ENCODE measurements at regions of chr7 and their contacts with region 1.

Region 1: DNA sequence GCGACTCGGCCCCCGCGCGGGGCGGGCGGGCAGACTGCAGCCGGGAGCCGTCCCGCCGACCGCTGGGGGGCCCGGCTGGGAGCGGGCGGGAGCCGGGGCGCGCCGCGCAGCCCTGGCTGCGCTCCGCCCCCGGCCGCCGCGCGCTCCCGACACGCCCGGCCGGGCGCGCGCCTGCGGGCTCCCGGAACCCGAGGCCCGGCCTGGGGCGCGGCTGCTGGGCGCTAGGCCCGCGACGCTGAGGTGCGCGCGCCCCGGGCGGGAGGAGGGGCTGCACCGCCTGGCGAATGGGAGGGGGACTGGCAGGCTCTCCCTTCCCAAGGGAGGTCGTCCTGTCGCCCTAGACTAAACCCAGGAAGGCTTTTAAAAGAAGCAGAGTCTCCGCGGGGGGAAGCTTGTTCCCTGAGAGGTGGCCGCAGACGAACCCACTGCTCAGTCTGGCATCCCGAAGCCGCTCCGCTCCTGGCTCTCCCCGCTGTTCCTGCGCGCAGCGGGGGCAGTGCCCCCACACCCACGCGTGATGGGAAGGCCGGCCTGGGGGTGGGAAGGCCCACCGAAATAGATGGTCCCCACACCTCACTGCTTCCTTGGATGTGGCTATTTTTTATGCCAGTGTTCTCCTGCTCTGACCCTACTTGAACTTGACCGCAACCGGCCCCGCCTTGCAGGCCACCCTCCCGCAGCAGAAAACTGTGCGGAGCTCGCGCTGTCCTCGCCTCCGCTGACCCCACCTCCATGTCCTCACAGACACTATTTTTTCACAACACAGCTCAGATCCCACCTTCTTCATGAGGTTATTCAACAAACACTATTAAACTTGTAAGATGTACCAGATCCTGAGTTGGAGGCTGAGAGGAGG is at the start of gene VOPP1:
- DNase-seq: peak in 9 of 10 donors; percentile 38 to 69 (median 58)
- ATAC-seq: peak; percentile 57 to 70
- H3K4me3 Mint-ChIP-seq: peak within 1 kb of the TSS; percentile 86 to 97 (median 94)
- H3K27ac Mint-ChIP-seq: peak within 1 kb of the TSS; percentile 85 to 96 (median 92)
- H3K4me1 Mint-ChIP-seq: peaks cover 32 to 56% (median 53%) of the 10 kb centered on the region in 4 donors
- H3K27me3 Mint-ChIP-seq: no peaks in the 10 kb centered on the region
- polyA plus RNA-seq, gene VOPP1: 19.5 to 31.5 (median 20.9) TPM

Region 2: GRCh38 chr7:55469271-55469681 is 103.3 kb before region 1 on chr7:
- POLR2A ChIA-PET with region 1: interaction called, 28 read pairs
- DNase-seq: peak in 5 of 10 donors; percentile 29 to 80 (median 46)
- ATAC-seq: peak; percentile 78 to 80
- H3K4me3 Mint-ChIP-seq: peak overlapping the region; percentile 19 to 77 (median 52)
- H3K27ac Mint-ChIP-seq: peak overlapping the region; percentile 89 to 97 (median 94)
- H3K4me1 Mint-ChIP-seq: peaks cover 25 to 81% (median 68%) of the 10 kb centered on the region in 4 donors
- H3K27me3 Mint-ChIP-seq: no peaks in the 10 kb centered on the region

Region 3: DNA sequence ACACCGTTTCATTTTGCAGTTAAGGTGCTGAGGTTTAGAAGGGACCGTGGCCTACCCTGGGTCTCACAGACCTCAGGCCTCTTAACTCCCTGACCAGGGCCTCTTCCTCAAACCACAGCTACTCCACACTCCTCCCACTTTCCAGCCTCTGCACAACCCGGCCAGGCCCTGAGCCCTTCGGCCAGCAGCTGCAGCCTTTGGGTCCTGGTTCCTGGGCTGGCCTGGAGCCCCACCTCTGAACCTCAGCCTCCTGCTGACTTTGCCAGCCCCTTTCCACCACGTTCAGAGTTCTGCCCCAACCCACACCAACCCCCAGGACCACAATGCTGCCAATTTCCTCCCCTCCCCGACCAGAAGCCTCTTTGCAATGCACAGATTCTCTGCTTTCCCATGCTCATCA is 84.4 kb before region 1 on chr7:
- POLR2A ChIA-PET with region 1: no interaction called
- DNase-seq: no peak
- ATAC-seq: no peak
- H3K4me3 Mint-ChIP-seq: peak overlapping the region in 1 of 10 donors; percentile 48
- H3K27ac Mint-ChIP-seq: peak overlapping the region in 7 of 10 donors; percentile 25 to 85 (median 48)
- H3K4me1 Mint-ChIP-seq: peaks cover 32 to 60% (median 37%) of the 10 kb centered on the region in 4 donors
- H3K27me3 Mint-ChIP-seq: no peaks in the 10 kb centered on the region